ENCODE measurements at regions of chr6 and their contacts with region 1.

Region 1: GRCh38 chr6:84785671-84786070 is 21.3 kb upstream of the TBX18 start:
- DNase-seq: no peak
- H3K4me3 ChIP-seq: no peak overlapping the region
- H3K27ac ChIP-seq: no peak overlapping the region
- H3K4me1 ChIP-seq: peaks cover 0 to 8% (median 0%) of the 10 kb centered on the region in 4 donors
- H3K27me3 ChIP-seq: no peaks in the 10 kb centered on the region
- CTCF ChIP-seq: no peak

Region 2: DNA sequence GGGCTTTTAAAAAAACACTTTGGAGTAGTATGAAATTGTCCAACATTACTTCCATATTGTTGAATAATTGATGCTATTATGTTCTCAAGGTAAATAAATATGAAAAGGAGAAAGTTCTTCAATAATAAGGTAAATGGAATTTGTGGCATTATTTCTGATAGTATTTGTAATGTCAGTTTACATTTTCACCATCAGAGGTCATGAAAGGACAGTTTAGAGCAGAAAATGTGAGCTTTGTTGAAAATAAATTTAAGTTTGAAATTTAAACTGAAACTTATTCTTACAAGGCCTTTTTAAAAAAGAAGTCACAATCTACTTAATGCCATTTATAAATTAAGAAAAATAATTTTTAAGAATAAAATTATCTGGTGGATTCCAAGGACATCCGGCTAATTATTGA is 542.4 kb before region 1 on chr6:
- intact Hi-C with region 1: loop called (anchors 5 kb)
- DNase-seq: no peak
- H3K4me3 ChIP-seq: no peak overlapping the region
- H3K27ac ChIP-seq: no peak overlapping the region
- H3K4me1 ChIP-seq: peaks cover 0 to 11% (median 4%) of the 10 kb centered on the region in 4 donors
- H3K27me3 ChIP-seq: no peaks in the 10 kb centered on the region
- CTCF ChIP-seq: peak in 1 of 2 experiments; percentile 14

Region 3: GRCh38 chr6:85561750-85562357 is 776.2 kb after region 1 on chr6:
- intact Hi-C with region 1: no loop called
- DNase-seq: no peak
- H3K4me3 ChIP-seq: no peak overlapping the region
- H3K27ac ChIP-seq: no peak overlapping the region
- H3K4me1 ChIP-seq: no peaks in the 10 kb centered on the region
- H3K27me3 ChIP-seq: no peaks in the 10 kb centered on the region
- CTCF ChIP-seq: no peak